ENCODE measurements at regions of chr13 and their contacts with region 1.

Region 1: GRCh38 chr13:42821437-42821836 is 40.1 kb downstream of the FAM216B start:
- DNase-seq: no peak
- ATAC-seq: no peak
- H3K4me3 ChIP-seq: no peak overlapping the region
- H3K27ac ChIP-seq: no peak overlapping the region
- H3K4me1 ChIP-seq: no peaks in the 10 kb centered on the region
- H3K27me3 ChIP-seq: no peaks in the 10 kb centered on the region
- CTCF ChIP-seq: no peak
- EP300 ChIP-seq: no peak
- POLR2A ChIP-seq: no peak
- RAD21 ChIP-seq: no peak

Region 2: GRCh38 chr13:42707586-42707985 is 113.9 kb before region 1 on chr13:
- CTCF ChIA-PET with region 1: no interaction called
- POLR2A ChIA-PET with region 1: no interaction called
- in situ Hi-C with region 1: no loop called
- intact Hi-C with region 1: no loop called
- DNase-seq: no peak
- ATAC-seq: no peak
- H3K4me3 ChIP-seq: no peak overlapping the region
- H3K27ac ChIP-seq: no peak overlapping the region
- H3K4me1 ChIP-seq: no peaks in the 10 kb centered on the region
- H3K27me3 ChIP-seq: no peaks in the 10 kb centered on the region
- CTCF ChIP-seq: no peak
- EP300 ChIP-seq: no peak
- POLR2A ChIP-seq: no peak
- RAD21 ChIP-seq: no peak

Region 3: GRCh38 chr13:42893214-42893671 is 71.8 kb after region 1 on chr13:
- CTCF ChIA-PET with region 1: no interaction called
- POLR2A ChIA-PET with region 1: no interaction called
- in situ Hi-C with region 1: no loop called
- intact Hi-C with region 1: loop called (anchors 2 kb)
- DNase-seq: no peak
- ATAC-seq: no peak
- H3K4me3 ChIP-seq: no peak overlapping the region
- H3K27ac ChIP-seq: no peak overlapping the region
- H3K4me1 ChIP-seq: no peaks in the 10 kb centered on the region
- H3K27me3 ChIP-seq: no peaks in the 10 kb centered on the region
- CTCF ChIP-seq: no peak
- EP300 ChIP-seq: no peak
- POLR2A ChIP-seq: no peak
- RAD21 ChIP-seq: no peak

Measured in HepG2 (cell line).